ENCODE measurements at regions of chr3 and their contacts with region 1.

Region 1: GRCh38 chr3:12984023-12984823 is 89.0 kb downstream of the IQSEC1 start:
- DNase-seq: peak; percentile 70 to 83
- ATAC-seq: peak; percentile 91 to 98
- H3K4me3 ChIP-seq: no peak overlapping the region
- H3K27ac ChIP-seq: no peak overlapping the region
- H3K4me1 ChIP-seq: no peaks in the 10 kb centered on the region
- CTCF ChIP-seq: peak; percentile 68
- EP300 ChIP-seq: no peak
- POLR2A ChIP-seq: no peak
- RAD21 ChIP-seq: peak; percentile 57 to 72

Region 2: GRCh38 chr3:12884186-12884680 is 100.0 kb before region 1 on chr3:
- CTCF ChIA-PET with region 1: no interaction called
- POLR2A ChIA-PET with region 1: no interaction called
- DNase-seq: no peak
- ATAC-seq: no peak; a peak in 1 of 6 replicates
- H3K4me3 ChIP-seq: no peak overlapping the region
- H3K27ac ChIP-seq: no peak overlapping the region
- H3K4me1 ChIP-seq: no peaks in the 10 kb centered on the region
- CTCF ChIP-seq: no peak
- EP300 ChIP-seq: no peak
- POLR2A ChIP-seq: no peak
- RAD21 ChIP-seq: no peak

Region 3: GRCh38 chr3:12967606-12968351 is 16.4 kb before region 1 on chr3:
- CTCF ChIA-PET with region 1: interaction called, 74 read pairs
- POLR2A ChIA-PET with region 1: interaction called, 3 read pairs
- DNase-seq: peak; percentile 89
- ATAC-seq: peak; percentile 73 to 88
- H3K4me3 ChIP-seq: peak overlapping the region; percentile 75
- H3K27ac ChIP-seq: peak overlapping the region; percentile 82 to 93
- H3K4me1 ChIP-seq: peaks cover 25% of the 10 kb centered on the region
- CTCF ChIP-seq: no peak
- EP300 ChIP-seq: no peak
- POLR2A ChIP-seq: peak; percentile 55
- RAD21 ChIP-seq: no peak